CD4-positive, alpha-beta T cell (primary cell): ENCODE measurements at regions of chr15 and their contacts with region 1.

Region 1: DNA sequence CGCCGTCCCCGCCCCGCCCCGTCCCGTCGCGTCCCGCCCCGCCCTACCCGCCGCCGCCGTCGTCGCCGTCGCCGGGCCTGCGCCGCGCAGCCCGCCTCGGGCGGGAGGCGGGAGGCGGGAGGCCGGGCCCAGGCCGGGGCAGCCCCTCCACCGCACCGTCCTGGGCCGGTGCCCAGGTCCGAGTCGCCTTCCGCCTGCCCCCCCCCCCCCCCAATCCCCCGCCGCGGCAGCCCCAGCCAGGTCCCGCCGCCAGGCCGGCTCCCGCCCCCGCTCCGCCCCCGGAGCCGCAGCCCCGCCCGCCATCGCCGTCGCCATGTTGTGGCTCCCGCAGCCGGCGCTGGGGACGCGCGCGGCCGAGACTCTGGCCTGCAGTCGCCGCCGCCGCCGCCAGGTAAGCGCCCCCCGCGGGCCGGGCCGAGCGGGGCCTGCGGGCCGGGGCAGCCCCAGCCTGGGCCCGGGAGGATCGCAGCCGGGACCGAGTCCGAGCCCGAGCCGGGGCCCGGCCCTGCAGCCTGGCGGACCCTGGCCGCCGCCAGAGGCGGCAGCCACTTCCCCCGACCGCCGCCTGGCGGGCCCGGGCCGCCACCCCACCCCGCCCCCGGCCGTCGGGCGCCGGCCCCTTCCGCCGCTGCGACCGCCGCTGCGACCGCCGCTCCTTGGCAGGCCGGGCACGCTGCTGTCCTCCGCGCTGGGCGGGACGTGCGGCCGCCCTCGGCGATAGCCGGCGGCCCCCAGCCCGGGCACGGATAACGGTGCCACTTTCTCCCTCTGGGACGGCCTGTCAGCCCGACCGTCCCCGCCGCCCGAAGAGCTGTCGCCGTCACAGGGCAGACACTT is at the start of gene ZNF592:
- DNase-seq: peak; percentile 64 to 92 (median 78)
- ATAC-seq: peak; percentile 65
- H3K4me3 ChIP-seq: peak within 1 kb of the TSS; percentile 94
- H3K4me3 Mint-ChIP-seq: peak within 1 kb of the TSS; percentile 98
- H3K27ac ChIP-seq: peak within 1 kb of the TSS; percentile 75 to 96
- H3K27ac Mint-ChIP-seq: peak within 1 kb of the TSS; percentile 97
- H3K4me1 ChIP-seq: peaks cover 54% of the 10 kb centered on the region
- H3K4me1 Mint-ChIP-seq: peaks cover 70% of the 10 kb centered on the region
- H3K27me3 ChIP-seq: no peaks in the 10 kb centered on the region
- H3K27me3 Mint-ChIP-seq: no peaks in the 10 kb centered on the region
- CTCF ChIP-seq: no peak
- total RNA-seq, gene ZNF592: 37.5 to 38.2 TPM

Region 2: DNA sequence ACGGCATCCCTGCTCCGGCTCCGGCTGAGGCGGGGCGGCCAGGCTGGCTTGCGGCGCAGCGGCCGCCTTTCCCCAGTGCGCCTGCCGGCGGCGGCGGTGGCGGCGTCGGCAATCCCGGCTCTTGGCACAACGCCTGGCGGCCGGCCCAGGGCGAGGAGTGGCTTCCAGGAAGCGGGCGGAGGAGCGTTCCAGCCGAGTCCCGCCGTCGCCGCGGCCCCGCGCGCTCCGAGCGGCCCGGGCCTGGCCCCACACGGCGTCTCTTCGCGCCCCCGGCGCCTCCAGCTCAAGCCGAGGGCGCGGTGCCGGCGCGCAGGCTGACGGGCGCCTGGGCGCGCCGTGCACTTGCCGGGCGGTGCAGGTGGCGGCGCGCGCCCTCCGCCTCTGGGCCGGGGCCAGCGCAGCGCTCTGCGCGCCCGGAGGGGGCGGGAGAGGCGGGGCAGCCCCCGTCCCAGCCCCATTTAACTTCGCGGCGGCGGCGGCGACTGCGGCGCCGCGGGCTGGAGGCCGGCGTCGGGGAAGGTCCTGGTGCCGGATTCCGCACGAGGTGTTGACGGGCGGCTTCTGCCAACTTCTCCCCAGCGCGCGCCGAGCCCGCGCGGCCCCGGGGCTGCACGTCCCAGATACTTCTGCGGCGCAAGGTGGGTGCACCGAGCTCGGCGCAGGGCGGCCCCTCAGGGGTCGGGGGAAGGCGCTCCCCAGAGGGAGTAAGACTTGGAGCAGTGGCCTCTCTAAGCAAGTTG is 1094.7 kb before region 1 on chr15 and contains the start of gene ADAMTSL3:
- CTCF ChIA-PET with region 1: no interaction called
- POLR2A ChIA-PET with region 1: no interaction called
- intact Hi-C with region 1: no loop called
- DNase-seq: no peak
- ATAC-seq: no peak
- H3K4me3 ChIP-seq: no peak within 1 kb of the TSS
- H3K4me3 Mint-ChIP-seq: no peak within 1 kb of the TSS
- H3K27ac ChIP-seq: no peak within 1 kb of the TSS
- H3K27ac Mint-ChIP-seq: no peak within 1 kb of the TSS
- H3K4me1 ChIP-seq: no peaks in the 10 kb centered on the region
- H3K4me1 Mint-ChIP-seq: no peaks in the 10 kb centered on the region
- H3K27me3 ChIP-seq: peaks cover 16 to 21% of the 10 kb centered on the region in 2 experiments
- H3K27me3 Mint-ChIP-seq: peaks cover 44% of the 10 kb centered on the region
- CTCF ChIP-seq: no peak
- total RNA-seq, gene ADAMTSL3: not detected

Region 3: DNA sequence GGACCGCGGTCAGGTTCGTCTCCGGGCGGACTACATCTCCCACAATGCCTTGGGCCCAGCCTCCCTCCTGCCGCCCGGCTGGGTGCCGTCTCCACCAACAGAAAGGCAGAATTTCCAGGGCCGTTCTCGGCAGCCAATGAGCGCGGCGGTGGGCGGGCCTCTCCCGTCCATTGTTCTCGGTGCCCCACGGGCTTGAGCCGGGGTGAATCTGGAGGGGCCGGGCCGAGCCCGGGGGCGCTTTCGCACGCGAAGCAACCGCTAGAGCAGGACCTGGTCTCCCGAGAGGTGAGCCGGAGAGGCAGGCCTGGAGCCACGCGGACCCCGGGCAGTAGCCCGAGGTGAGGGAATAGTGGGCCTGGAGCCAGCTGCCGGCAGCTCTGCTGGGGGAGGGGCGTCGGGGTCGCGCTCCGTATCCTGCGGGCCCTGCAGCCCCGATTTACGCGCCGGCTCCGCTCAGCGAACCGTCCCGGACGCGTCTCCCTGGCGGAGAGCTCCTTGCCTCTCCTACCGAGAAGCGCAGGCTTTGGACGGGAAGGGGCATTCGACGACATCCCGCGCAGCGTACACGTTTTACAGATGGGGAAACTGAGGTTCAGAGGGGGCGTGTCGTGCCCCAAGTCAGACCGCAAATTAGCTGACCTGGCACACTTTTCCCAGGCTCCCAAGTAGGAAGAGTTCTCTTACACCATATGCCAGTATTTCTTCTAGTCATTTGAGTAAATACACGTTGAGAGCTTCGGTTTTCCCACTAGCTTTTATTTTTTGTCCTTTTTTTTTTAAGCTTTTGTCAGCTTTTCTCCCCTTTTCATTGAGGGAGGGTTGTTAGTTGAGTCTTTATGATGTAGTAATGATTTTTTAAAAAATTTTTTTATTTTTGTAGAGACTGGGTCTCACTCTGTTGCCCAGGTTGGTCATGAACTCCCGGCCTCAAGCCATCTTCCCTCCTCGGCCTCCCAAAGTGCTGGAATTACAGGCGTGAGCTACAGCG is 147.3 kb before region 1 on chr15 and contains the start of gene ZSCAN2:
- CTCF ChIA-PET with region 1: no interaction called
- POLR2A ChIA-PET with region 1: interaction called, 5 read pairs
- intact Hi-C with region 1: loop called in 1 of 2 experiments (anchors 5 kb)
- DNase-seq: peak; percentile 87 to 95 (median 90)
- ATAC-seq: peak; percentile 97
- H3K4me3 ChIP-seq: peak within 1 kb of the TSS; percentile 95
- H3K4me3 Mint-ChIP-seq: peak within 1 kb of the TSS; percentile 98
- H3K27ac ChIP-seq: peak within 1 kb of the TSS in 1 of 2 donors; percentile 13
- H3K27ac Mint-ChIP-seq: peak within 1 kb of the TSS; percentile 78
- H3K4me1 ChIP-seq: peaks cover 62% of the 10 kb centered on the region
- H3K4me1 Mint-ChIP-seq: peaks cover 72% of the 10 kb centered on the region
- H3K27me3 ChIP-seq: no peaks in the 10 kb centered on the region
- H3K27me3 Mint-ChIP-seq: no peaks in the 10 kb centered on the region
- CTCF ChIP-seq: no peak
- total RNA-seq, gene ZSCAN2: 3.8 to 5.0 TPM

Region 4: GRCh38 chr15:84716036-84716799 is 32.3 kb before region 1 on chr15 and contains the start of gene SEC11A:
- CTCF ChIA-PET with region 1: interaction called, 8 read pairs
- POLR2A ChIA-PET with region 1: interaction called, 311 read pairs
- intact Hi-C with region 1: loop called (anchors 1 kb)
- DNase-seq: peak; percentile 83 to 95 (median 89)
- ATAC-seq: peak; percentile 95
- H3K4me3 ChIP-seq: peak within 1 kb of the TSS; percentile 99
- H3K4me3 Mint-ChIP-seq: peak within 1 kb of the TSS; percentile 93
- H3K27ac ChIP-seq: peak within 1 kb of the TSS; percentile 70 to 74
- H3K27ac Mint-ChIP-seq: peak within 1 kb of the TSS; percentile 95
- H3K4me1 ChIP-seq: peaks cover 46% of the 10 kb centered on the region
- H3K4me1 Mint-ChIP-seq: peaks cover 60% of the 10 kb centered on the region
- H3K27me3 ChIP-seq: no peaks in the 10 kb centered on the region
- H3K27me3 Mint-ChIP-seq: no peaks in the 10 kb centered on the region
- CTCF ChIP-seq: no peak
- total RNA-seq, gene SEC11A: 44.1 to 47.0 TPM

Region 5: DNA sequence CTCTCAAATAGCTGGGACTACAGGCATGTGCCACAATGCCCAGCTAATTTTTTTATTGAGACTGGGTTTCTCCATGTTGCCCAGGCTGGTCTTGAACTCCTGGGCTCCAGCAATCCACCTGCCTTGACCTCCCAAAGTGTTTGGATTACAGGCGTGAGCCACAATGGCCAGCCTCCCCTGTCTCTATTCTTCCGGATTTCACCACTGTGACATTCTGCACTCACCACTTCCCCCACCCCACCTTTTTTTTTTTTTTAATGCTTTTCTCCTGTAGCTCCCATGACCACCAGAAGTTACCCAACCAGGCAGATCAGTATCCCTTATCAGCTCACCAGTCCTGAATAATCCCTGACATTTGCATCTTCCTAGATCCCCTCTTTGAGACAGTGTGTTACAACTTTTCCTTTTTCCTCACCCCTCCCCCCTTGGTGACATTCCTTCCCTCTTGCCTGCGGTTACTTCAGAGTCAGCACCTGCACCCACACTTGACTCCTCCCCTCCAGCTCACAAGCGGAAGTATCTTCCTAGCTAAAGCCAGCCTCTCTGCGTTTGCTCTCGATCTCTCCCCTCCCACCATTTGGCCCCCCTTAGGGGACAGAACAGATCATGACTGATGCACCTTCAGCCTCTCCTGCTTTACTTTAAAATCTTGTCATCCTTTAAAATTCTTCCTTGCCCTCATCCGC is 13.6 kb before region 1 on chr15:
- CTCF ChIA-PET with region 1: interaction called, 7 read pairs
- POLR2A ChIA-PET with region 1: interaction called, 162 read pairs
- intact Hi-C with region 1: loop called (anchors 1 kb)
- DNase-seq: peak; percentile 40 to 91 (median 64)
- ATAC-seq: peak; percentile 86
- H3K4me3 ChIP-seq: peak overlapping the region; percentile 34
- H3K4me3 Mint-ChIP-seq: peak overlapping the region; percentile 84
- H3K27ac ChIP-seq: peak overlapping the region; percentile 46 to 70
- H3K27ac Mint-ChIP-seq: peak overlapping the region; percentile 91
- H3K4me1 ChIP-seq: peaks cover 51% of the 10 kb centered on the region
- H3K4me1 Mint-ChIP-seq: peaks cover 51% of the 10 kb centered on the region
- H3K27me3 ChIP-seq: no peaks in the 10 kb centered on the region
- H3K27me3 Mint-ChIP-seq: no peaks in the 10 kb centered on the region
- CTCF ChIP-seq: no peak

Region 6: DNA sequence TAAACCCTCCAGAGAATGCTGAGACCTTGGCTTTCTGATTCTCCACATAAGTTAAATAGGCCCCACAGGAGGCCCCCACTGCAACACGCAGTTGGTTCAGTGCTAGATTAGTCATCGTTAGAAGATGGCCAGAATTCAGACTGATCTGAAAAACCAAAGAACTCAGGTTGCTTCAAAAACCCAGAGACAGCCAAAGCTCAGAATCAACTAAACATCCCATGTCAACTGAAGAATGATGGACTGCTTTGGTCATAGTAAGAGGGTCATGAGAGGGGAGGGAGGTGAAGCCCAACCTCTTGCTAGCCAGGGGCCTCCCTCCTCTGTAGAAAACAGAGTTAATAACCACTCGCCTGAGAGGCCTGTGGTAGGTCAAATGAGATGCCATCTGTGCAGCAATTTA is 725.0 kb after region 1 on chr15:
- CTCF ChIA-PET with region 1: no interaction called
- POLR2A ChIA-PET with region 1: no interaction called
- intact Hi-C with region 1: no loop called
- DNase-seq: no peak
- ATAC-seq: no peak
- H3K4me3 ChIP-seq: no peak overlapping the region
- H3K4me3 Mint-ChIP-seq: no peak overlapping the region
- H3K27ac ChIP-seq: no peak overlapping the region
- H3K27ac Mint-ChIP-seq: peak overlapping the region; percentile 26
- H3K4me1 ChIP-seq: peaks cover 23% of the 10 kb centered on the region
- H3K4me1 Mint-ChIP-seq: peaks cover 91% of the 10 kb centered on the region
- H3K27me3 ChIP-seq: no peaks in the 10 kb centered on the region
- H3K27me3 Mint-ChIP-seq: no peaks in the 10 kb centered on the region
- CTCF ChIP-seq: no peak